ENCODE measurements at regions of chr13 and their contacts with region 1.

Region 1: DNA sequence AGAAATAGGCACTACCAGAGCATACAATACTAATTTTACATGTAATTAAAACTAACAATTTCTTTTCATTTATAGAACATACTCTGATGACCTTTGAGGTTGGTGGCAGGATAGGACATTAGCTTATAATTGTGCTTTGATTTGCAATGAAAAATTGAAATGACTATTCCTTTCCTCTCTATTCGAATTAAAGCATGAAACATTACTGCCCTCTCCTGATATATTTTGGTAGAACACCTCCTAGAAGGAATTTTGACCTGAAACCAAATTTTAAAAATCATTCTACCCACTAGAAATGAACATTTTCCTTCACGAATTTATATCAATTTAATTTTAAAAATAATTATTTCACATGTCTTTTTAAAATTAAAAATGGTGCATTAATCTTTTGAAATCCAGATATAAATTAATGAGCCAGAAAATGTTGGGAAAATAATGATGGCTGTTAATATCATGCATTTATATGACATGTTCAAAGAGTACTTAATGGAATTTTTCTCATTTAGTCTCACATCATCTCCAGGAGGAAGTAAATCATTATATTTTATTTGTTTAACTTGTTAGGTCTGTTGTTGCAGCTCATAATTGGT is 556.3 kb upstream of the ARGLU1 start:
- DNase-seq: peak; percentile 29
- H3K4me3 ChIP-seq: no peak overlapping the region
- H3K27ac ChIP-seq: no peak overlapping the region
- H3K4me1 ChIP-seq: peaks cover 8% of the 10 kb centered on the region
- CTCF ChIP-seq: peak; percentile 76

Region 2: DNA sequence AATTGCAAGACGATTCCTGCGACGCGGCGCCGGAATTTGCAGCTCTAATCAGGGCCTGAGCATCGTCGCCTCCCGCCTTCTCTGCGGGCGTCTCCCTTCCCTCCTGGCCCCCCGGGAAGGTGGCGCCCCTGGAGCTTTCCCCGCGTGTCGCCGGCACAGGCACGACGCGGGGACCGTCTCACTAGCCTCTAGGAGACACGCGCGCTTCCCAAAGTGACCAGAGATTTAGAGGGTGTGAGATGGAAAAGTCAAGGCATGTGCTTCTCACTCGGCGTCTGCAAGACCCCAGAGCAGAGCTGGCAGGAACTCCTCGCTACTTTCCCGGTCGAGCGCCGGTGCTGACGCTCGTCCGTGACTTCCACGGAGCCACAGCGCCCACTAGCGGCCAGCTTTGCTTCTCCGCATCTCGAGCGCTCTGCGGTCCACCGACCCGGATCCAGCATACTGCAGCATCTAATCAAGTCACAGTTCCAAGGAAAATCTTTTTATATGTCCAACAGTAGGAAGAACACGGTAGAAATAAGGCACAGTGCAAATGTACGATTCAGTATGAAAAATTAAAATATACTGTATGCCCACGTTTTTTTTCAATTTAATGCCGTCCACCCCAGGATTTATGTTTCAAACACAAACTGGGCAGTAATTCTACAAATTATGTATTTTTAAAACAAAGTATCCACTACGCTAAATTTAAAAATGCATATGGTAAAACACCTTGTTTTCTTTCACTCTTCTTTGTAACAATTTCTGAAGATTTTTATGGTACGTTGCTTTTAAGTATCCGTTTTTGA is 587.8 kb before region 1 on chr13:
- CTCF ChIA-PET with region 1: no interaction called
- POLR2A ChIA-PET with region 1: no interaction called
- intact Hi-C with region 1: loop called (anchors 2 kb)
- DNase-seq: peak; percentile 80
- H3K4me3 ChIP-seq: peak overlapping the region; percentile 68
- H3K27ac ChIP-seq: peak overlapping the region; percentile 25
- H3K4me1 ChIP-seq: no peaks in the 10 kb centered on the region
- CTCF ChIP-seq: peak; percentile 81

Region 3: GRCh38 chr13:107170270-107170931 is 46.2 kb after region 1 on chr13:
- CTCF ChIA-PET with region 1: no interaction called
- POLR2A ChIA-PET with region 1: no interaction called
- intact Hi-C with region 1: no loop called
- DNase-seq: no peak
- H3K4me3 ChIP-seq: no peak overlapping the region
- H3K27ac ChIP-seq: no peak overlapping the region
- H3K4me1 ChIP-seq: no peaks in the 10 kb centered on the region
- CTCF ChIP-seq: no peak